K562 (cell line): ENCODE measurements at regions of chr7 and their contacts with region 1.

Region 1: DNA sequence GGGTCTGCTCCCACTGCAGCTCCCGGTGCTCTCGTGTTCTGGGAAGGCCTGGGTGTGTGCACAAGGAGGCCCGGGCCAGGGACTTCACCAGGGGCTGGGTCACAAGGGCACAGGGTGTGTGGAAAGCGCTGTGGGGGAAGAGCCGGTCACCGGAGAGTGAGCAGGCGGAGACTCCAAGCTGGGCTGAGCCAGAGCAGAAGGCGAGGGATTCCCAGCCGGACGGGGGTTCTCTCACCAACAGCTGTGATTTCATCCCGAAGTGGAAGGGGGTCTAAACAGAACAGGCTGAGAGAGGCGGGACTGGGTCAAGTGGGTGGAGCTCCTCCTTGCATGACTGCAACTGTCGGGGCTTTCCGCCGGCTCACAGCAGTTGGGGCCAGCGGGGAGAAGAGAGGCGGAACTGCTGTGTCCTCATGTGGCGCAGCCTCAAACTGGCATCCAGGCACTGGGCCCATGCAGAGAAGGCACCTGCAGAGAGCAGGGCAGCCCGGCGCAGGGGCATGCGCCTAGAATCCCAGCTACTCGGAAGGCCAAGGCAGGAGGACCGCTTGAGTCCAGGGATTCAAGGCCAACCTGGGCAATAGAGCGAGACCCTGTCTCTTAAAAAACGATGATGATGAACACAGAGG is 7.6 kb upstream of the ORAI2 start:
- DNase-seq: no peak
- ATAC-seq: no peak
- H3K4me3 ChIP-seq: no peak overlapping the region
- H3K27ac ChIP-seq: no peak overlapping the region
- H3K4me1 ChIP-seq: peaks cover 10 to 46% of the 10 kb centered on the region in 2 experiments
- H3K27me3 ChIP-seq: no peaks in the 10 kb centered on the region
- CTCF ChIP-seq: no peak
- EP300 ChIP-seq: no peak
- POLR2A ChIP-seq: no peak
- RAD21 ChIP-seq: no peak

Region 2: GRCh38 chr7:100516135-100516812 is 1909.5 kb before region 1 on chr7:
- CTCF ChIA-PET with region 1: no interaction called
- POLR2A ChIA-PET with region 1: no interaction called
- in situ Hi-C with region 1: no loop called
- intact Hi-C with region 1: no loop called
- DNase-seq: peak in 3 of 4 experiments; percentile 38 to 53 (median 42)
- ATAC-seq: peak; percentile 61
- H3K4me3 ChIP-seq: no peak overlapping the region
- H3K27ac ChIP-seq: no peak overlapping the region
- H3K4me1 ChIP-seq: peaks cover 13 to 16% of the 10 kb centered on the region in 2 experiments; a peak in 4 of 5 replicates
- H3K27me3 ChIP-seq: no peaks in the 10 kb centered on the region
- CTCF ChIP-seq: no peak
- EP300 ChIP-seq: no peak
- POLR2A ChIP-seq: no peak
- RAD21 ChIP-seq: no peak

Region 3: GRCh38 chr7:102125127-102125561 is 300.6 kb before region 1 on chr7:
- CTCF ChIA-PET with region 1: no interaction called
- POLR2A ChIA-PET with region 1: no interaction called
- in situ Hi-C with region 1: no loop called
- intact Hi-C with region 1: no loop called
- DNase-seq: peak in 1 of 4 experiments; percentile 16
- ATAC-seq: no peak; the same call in 2 of the 3 replicates
- H3K4me3 ChIP-seq: no peak overlapping the region
- H3K27ac ChIP-seq: no peak overlapping the region
- H3K4me1 ChIP-seq: peaks cover 9 to 13% of the 10 kb centered on the region in 2 experiments; a peak in 4 of 5 replicates
- H3K27me3 ChIP-seq: no peaks in the 10 kb centered on the region
- CTCF ChIP-seq: peak in 1 of 3 experiments; percentile 21; a peak in 1 of 6 replicates
- EP300 ChIP-seq: no peak
- POLR2A ChIP-seq: no peak
- RAD21 ChIP-seq: no peak

Region 4: GRCh38 chr7:102440078-102440795 is 14.5 kb after region 1 on chr7:
- CTCF ChIA-PET with region 1: no interaction called
- POLR2A ChIA-PET with region 1: interaction called, 5 read pairs
- in situ Hi-C with region 1: no loop called
- intact Hi-C with region 1: loop called (anchors 1 kb)
- DNase-seq: peak; percentile 52 to 88 (median 67)
- ATAC-seq: peak; percentile 75
- H3K4me3 ChIP-seq: no peak overlapping the region
- H3K27ac ChIP-seq: no peak overlapping the region
- H3K4me1 ChIP-seq: peaks cover 35 to 60% of the 10 kb centered on the region in 2 experiments
- H3K27me3 ChIP-seq: no peaks in the 10 kb centered on the region; a peak in 1 of 5 replicates
- CTCF ChIP-seq: no peak
- EP300 ChIP-seq: peak; percentile 40; the same call in 1 of the 2 replicates
- POLR2A ChIP-seq: no peak
- RAD21 ChIP-seq: peak in 1 of 2 experiments; percentile 25; a peak in 1 of 4 replicates